Natural killer cell (primary cell): ENCODE measurements at regions of chr14 and their contacts with region 1.

Region 1: DNA sequence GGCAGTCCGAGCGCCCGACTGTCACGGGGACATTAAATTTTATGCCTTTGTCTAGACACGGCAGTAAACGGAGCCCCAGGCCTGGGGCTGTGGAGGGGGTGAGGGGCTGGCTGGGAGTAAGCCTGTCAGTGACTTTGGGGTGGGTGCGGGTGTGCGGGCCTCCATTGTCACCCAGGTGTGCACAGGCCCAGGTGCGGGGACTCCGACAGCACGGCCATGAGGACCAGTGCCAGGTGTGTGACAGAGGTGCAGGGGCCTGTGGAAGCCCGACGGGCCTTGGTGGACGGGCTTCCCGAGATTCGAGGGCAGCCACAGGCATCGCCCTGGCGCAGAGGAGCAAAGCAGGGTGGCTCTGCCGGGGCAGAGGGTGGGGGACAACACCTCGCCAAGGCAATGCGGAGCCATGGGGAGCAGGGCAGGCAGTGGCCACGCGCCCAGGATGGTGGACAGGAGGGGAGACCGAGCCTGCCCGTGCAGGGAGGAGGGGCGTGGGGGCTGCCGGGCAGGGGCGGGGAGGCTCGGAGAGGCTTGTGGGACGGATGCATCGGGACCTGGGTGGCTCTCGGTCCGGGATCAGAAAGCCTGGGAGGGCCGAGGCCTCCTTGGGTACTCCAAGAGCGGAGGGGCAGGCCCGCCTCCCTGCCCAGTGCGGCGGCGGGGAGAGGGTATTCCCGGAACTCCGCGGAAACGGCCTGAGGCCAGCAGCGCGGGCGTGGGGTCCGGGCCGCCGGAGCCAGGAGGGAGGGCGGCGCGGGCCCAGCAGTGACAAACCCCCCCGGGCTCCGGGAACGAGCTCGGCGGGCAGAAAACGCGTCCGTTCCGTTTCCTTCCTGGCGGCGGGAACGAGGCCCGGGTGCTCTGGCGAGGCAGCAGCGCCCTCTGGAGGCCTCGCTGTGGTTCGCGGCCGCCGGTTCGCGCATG is 1.5 kb downstream of the TMEM121 start:
- DNase-seq: peak; percentile 82 to 92
- ATAC-seq: peak; percentile 82 to 86 (median 84)
- H3K4me3 ChIP-seq: peak overlapping the region; percentile 27
- H3K4me3 Mint-ChIP-seq: peak overlapping the region; percentile 87
- H3K27ac ChIP-seq: no peak overlapping the region
- H3K27ac Mint-ChIP-seq: peak overlapping the region in 1 of 2 donors; percentile 60
- H3K4me1 ChIP-seq: peaks cover 56% of the 10 kb centered on the region
- H3K4me1 Mint-ChIP-seq: peaks cover 4 to 23% of the 10 kb centered on the region in 2 donors
- H3K27me3 ChIP-seq: peaks cover 15% of the 10 kb centered on the region
- H3K27me3 Mint-ChIP-seq: peaks cover 4 to 45% of the 10 kb centered on the region in 2 donors
- CTCF ChIP-seq: peak; percentile 91

Region 2: DNA sequence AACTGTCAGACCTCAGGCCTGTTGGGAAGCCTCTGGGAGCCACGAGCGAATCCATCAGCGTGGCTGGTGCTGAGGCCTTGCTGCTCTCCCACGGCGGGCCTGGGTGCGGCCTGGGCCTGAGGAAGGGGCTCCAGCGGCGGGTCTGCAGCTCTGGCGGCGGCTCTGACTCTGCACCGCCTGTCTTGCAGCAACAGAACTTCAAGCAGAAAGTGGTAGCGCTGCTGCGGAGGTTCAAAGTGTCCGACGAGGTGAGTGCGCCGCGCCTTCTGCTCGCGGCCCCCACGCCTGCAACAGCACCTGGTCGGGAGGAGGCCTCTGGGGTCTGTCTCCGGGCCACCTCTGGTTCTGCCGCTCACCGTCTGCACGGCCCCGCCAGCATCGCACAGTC is 158.3 kb before region 1 on chr14:
- intact Hi-C with region 1: loop called (anchors 2 kb)
- DNase-seq: no peak
- ATAC-seq: no peak
- H3K4me3 ChIP-seq: no peak overlapping the region
- H3K4me3 Mint-ChIP-seq: no peak overlapping the region
- H3K27ac ChIP-seq: no peak overlapping the region
- H3K27ac Mint-ChIP-seq: no peak overlapping the region
- H3K4me1 ChIP-seq: peaks cover 16% of the 10 kb centered on the region
- H3K4me1 Mint-ChIP-seq: peaks cover 5 to 7% of the 10 kb centered on the region in 2 donors
- H3K27me3 ChIP-seq: no peaks in the 10 kb centered on the region
- H3K27me3 Mint-ChIP-seq: no peaks in the 10 kb centered on the region
- CTCF ChIP-seq: no peak

Region 3: DNA sequence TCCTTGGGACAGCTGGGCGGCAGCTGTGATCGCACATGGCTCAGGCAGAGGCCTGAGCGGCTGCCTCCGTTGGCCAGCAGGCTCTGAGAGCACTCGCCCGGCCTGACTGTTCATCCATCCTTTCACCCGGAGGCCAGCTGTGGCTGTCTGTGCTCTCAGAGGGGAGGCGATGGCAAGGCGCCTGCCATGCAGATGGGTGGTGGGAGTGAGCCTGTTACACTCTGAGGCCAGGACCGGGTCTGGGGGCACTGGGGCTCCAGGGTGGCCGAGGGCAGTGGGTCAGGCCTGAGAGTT is 290.7 kb after region 1 on chr14:
- intact Hi-C with region 1: no loop called
- DNase-seq: no peak
- ATAC-seq: no peak
- H3K4me3 ChIP-seq: no peak overlapping the region
- H3K4me3 Mint-ChIP-seq: no peak overlapping the region
- H3K27ac ChIP-seq: peak overlapping the region; percentile 93
- H3K27ac Mint-ChIP-seq: no peak overlapping the region
- H3K4me1 ChIP-seq: peaks cover 20% of the 10 kb centered on the region
- H3K4me1 Mint-ChIP-seq: no peaks in the 10 kb centered on the region
- H3K27me3 ChIP-seq: no peaks in the 10 kb centered on the region
- H3K27me3 Mint-ChIP-seq: peaks cover 21 to 36% of the 10 kb centered on the region in 2 donors
- CTCF ChIP-seq: no peak

Region 4: GRCh38 chr14:106776395-106776983 is 1248.6 kb after region 1 on chr14:
- intact Hi-C with region 1: no loop called
- DNase-seq: no peak
- ATAC-seq: no peak
- H3K4me3 ChIP-seq: no peak overlapping the region
- H3K4me3 Mint-ChIP-seq: no peak overlapping the region
- H3K27ac ChIP-seq: no peak overlapping the region
- H3K27ac Mint-ChIP-seq: no peak overlapping the region
- H3K4me1 ChIP-seq: peaks cover 5% of the 10 kb centered on the region
- H3K4me1 Mint-ChIP-seq: peaks cover 5 to 15% of the 10 kb centered on the region in 2 donors
- H3K27me3 ChIP-seq: peaks cover 3% of the 10 kb centered on the region
- H3K27me3 Mint-ChIP-seq: peaks cover 0 to 3% of the 10 kb centered on the region in 2 donors
- CTCF ChIP-seq: no peak